Breast epithelium (tissue), 4 donors: ENCODE measurements at regions of chr11 and their contacts with region 1.

Region 1: GRCh38 chr11:10455637-10456487 is 798 bp downstream of the AMPD3 start:
- DNase-seq: no peak
- H3K4me3 ChIP-seq: peak overlapping the region; percentile 6 to 46 (median 16)
- H3K27ac ChIP-seq: peak overlapping the region in 1 of 2 donors; percentile 61
- H3K4me1 ChIP-seq: no peaks in the 10 kb centered on the region
- H3K27me3 ChIP-seq: no peaks in the 10 kb centered on the region
- CTCF ChIP-seq: no peak
- POLR2A ChIP-seq: no peak

Region 2: GRCh38 chr11:10494636-10495463 is 39.0 kb after region 1 on chr11:
- intact Hi-C with region 1: loop called (anchors 2 kb)
- DNase-seq: peak in 1 of 2 donors; percentile 36
- H3K4me3 ChIP-seq: no peak overlapping the region
- H3K27ac ChIP-seq: no peak overlapping the region
- H3K4me1 ChIP-seq: no peaks in the 10 kb centered on the region
- H3K27me3 ChIP-seq: no peaks in the 10 kb centered on the region
- CTCF ChIP-seq: no peak
- POLR2A ChIP-seq: no peak

Region 3: GRCh38 chr11:10505278-10506007 is 49.6 kb after region 1 on chr11:
- intact Hi-C with region 1: no loop called
- DNase-seq: no peak
- H3K4me3 ChIP-seq: no peak overlapping the region
- H3K27ac ChIP-seq: peak overlapping the region in 1 of 2 donors; percentile 1
- H3K4me1 ChIP-seq: no peaks in the 10 kb centered on the region
- H3K27me3 ChIP-seq: no peaks in the 10 kb centered on the region
- CTCF ChIP-seq: no peak
- POLR2A ChIP-seq: no peak